Stomach (tissue), 19 donors: ENCODE measurements at regions of chr5 and their contacts with region 1.

Region 1: GRCh38 chr5:95646554-95647431 is at the start of gene RFESD:
- DNase-seq: peak; percentile 99 to 100
- H3K4me3 ChIP-seq: peak within 1 kb of the TSS; percentile 38 to 53 (median 49)
- H3K27ac ChIP-seq: peak within 1 kb of the TSS; percentile 95 to 99 (median 96)
- H3K4me1 ChIP-seq: peaks cover 17 to 40% (median 28%) of the 10 kb centered on the region in 4 donors
- H3K27me3 ChIP-seq: no peaks in the 10 kb centered on the region
- CTCF ChIP-seq: peak in 1 of 7 experiments; percentile 21
- EP300 ChIP-seq: peak; percentile 99
- POLR2A ChIP-seq: peak in 2 of 4 donors; percentile 89 to 92
- total RNA-seq, gene RFESD: 2.0 TPM in 1 of 5 donors, not detected in the others

Region 2: GRCh38 chr5:95846554-95847260 is 199.9 kb after region 1 on chr5:
- intact Hi-C with region 1: loop called (anchors 10 kb)
- DNase-seq: peak; percentile 87 to 91
- H3K4me3 ChIP-seq: no peak overlapping the region
- H3K27ac ChIP-seq: peak overlapping the region; percentile 73 to 93 (median 85)
- H3K4me1 ChIP-seq: peaks cover 13 to 53% (median 37%) of the 10 kb centered on the region in 4 donors
- H3K27me3 ChIP-seq: no peaks in the 10 kb centered on the region
- CTCF ChIP-seq: peak in 6 of 7 experiments; percentile 85 to 95 (median 91)
- EP300 ChIP-seq: no peak
- POLR2A ChIP-seq: no peak